GM12878 (cell line): ENCODE measurements at regions of chr2 and their contacts with region 1.

Region 1: GRCh38 chr2:111168528-111169239 is 48.0 kb downstream of the BCL2L11 start:
- DNase-seq: peak; percentile 68
- ATAC-seq: peak; percentile 95
- H3K4me3 ChIP-seq: no peak overlapping the region
- H3K27ac ChIP-seq: no peak overlapping the region
- H3K4me1 ChIP-seq: peaks cover 17% of the 10 kb centered on the region
- H3K27me3 ChIP-seq: peaks cover 0 to 3% of the 10 kb centered on the region in 2 experiments; a peak in 1 of 4 replicates
- CTCF ChIP-seq: no peak
- EP300 ChIP-seq: peak; percentile 77 to 80; a peak in 3 of 4 replicates
- POLR2A ChIP-seq: no peak
- RAD21 ChIP-seq: no peak

Region 2: DNA sequence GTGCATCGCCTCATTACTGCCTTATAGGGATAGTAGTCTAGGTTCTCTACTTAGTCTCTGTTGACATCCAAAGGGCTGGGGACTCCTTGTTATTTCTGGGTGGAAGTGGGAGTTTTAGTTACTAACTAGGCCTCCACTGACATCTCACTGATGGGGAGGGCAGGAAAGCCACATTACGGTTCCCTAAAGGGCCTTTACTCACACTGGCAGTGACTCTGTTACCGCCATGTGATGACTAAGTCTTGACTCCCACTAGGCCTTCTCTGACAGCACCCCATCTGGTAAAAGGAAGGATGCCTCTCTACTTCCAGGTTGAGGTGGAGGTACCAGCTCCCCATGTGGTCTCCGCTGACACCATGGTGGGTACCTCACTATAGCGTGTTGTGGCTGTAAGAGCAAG is 62.0 kb before region 1 on chr2:
- CTCF ChIA-PET with region 1: no interaction called
- POLR2A ChIA-PET with region 1: no interaction called
- RAD21 ChIA-PET with region 1: no interaction called
- SMC1A ChIA-PET with region 1: no interaction called
- in situ Hi-C with region 1: no loop called
- intact Hi-C with region 1: no loop called
- DNase-seq: no peak
- ATAC-seq: no peak
- H3K4me3 ChIP-seq: no peak overlapping the region
- H3K27ac ChIP-seq: no peak overlapping the region
- H3K4me1 ChIP-seq: no peaks in the 10 kb centered on the region
- H3K27me3 ChIP-seq: peaks cover 0 to 5% of the 10 kb centered on the region in 2 experiments; a peak in 3 of 4 replicates
- CTCF ChIP-seq: no peak
- EP300 ChIP-seq: no peak
- POLR2A ChIP-seq: no peak
- RAD21 ChIP-seq: no peak

Region 3: GRCh38 chr2:111120253-111121027 is 48.2 kb before region 1 on chr2 and contains the start of gene BCL2L11:
- CTCF ChIA-PET with region 1: interaction called, 5 read pairs
- POLR2A ChIA-PET with region 1: interaction called, 4 read pairs
- RAD21 ChIA-PET with region 1: interaction called, 26 read pairs
- SMC1A ChIA-PET with region 1: interaction called, 17 read pairs
- in situ Hi-C with region 1: no loop called
- intact Hi-C with region 1: no loop called
- DNase-seq: no peak
- ATAC-seq: peak; percentile 66
- H3K4me3 ChIP-seq: peak within 1 kb of the TSS; percentile 80
- H3K27ac ChIP-seq: no peak within 1 kb of the TSS
- H3K4me1 ChIP-seq: peaks cover 37% of the 10 kb centered on the region
- H3K27me3 ChIP-seq: peaks cover 7 to 29% of the 10 kb centered on the region in 2 experiments
- CTCF ChIP-seq: peak; percentile 11 to 31 (median 29); a peak in 1 of 6 replicates
- EP300 ChIP-seq: no peak
- POLR2A ChIP-seq: peak; percentile 88
- RAD21 ChIP-seq: no peak
- polyA plus RNA-seq, gene BCL2L11: 0.29 to 0.64 TPM

Region 4: DNA sequence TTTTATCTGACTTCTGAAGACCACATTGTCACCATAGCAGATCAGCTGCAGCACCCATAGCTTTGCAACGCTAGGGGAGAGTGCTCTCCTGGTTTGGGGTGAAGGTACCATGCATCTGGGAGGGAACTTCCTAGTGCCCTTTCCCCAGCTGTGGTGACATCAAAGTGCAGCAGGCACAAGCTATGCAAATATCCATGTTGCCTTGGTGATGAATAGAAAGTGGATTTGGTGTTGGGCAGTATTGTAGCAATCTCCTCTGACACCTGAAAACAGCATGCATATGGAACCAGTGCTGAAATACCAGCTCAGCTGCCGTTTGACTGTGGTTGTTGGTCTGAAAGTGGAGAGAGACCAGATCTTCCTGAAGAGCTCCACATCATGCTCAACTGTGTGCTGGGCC is 10.9 kb before region 1 on chr2:
- CTCF ChIA-PET with region 1: interaction called, 26 read pairs
- POLR2A ChIA-PET with region 1: interaction called, 21 read pairs
- RAD21 ChIA-PET with region 1: interaction called, 27 read pairs
- SMC1A ChIA-PET with region 1: interaction called, 44 read pairs
- in situ Hi-C with region 1: no loop called
- intact Hi-C with region 1: no loop called
- DNase-seq: peak; percentile 69
- ATAC-seq: peak; percentile 82
- H3K4me3 ChIP-seq: no peak overlapping the region
- H3K27ac ChIP-seq: no peak overlapping the region
- H3K4me1 ChIP-seq: peaks cover 19% of the 10 kb centered on the region
- H3K27me3 ChIP-seq: no peaks in the 10 kb centered on the region
- CTCF ChIP-seq: peak; percentile 19 to 27 (median 22); a peak in 3 of 6 replicates
- EP300 ChIP-seq: no peak
- POLR2A ChIP-seq: no peak
- RAD21 ChIP-seq: no peak

Region 5: GRCh38 chr2:111185638-111186022 is 16.9 kb after region 1 on chr2:
- CTCF ChIA-PET with region 1: interaction called, 6 read pairs
- POLR2A ChIA-PET with region 1: interaction called, 9 read pairs
- RAD21 ChIA-PET with region 1: interaction called, 13 read pairs
- SMC1A ChIA-PET with region 1: interaction called, 137 read pairs
- in situ Hi-C with region 1: no loop called
- intact Hi-C with region 1: no loop called
- DNase-seq: no peak
- ATAC-seq: peak; percentile 62
- H3K4me3 ChIP-seq: no peak overlapping the region
- H3K27ac ChIP-seq: no peak overlapping the region
- H3K4me1 ChIP-seq: no peaks in the 10 kb centered on the region
- H3K27me3 ChIP-seq: peaks cover 0 to 22% of the 10 kb centered on the region in 2 experiments; a peak in 2 of 4 replicates
- CTCF ChIP-seq: no peak
- EP300 ChIP-seq: no peak
- POLR2A ChIP-seq: no peak
- RAD21 ChIP-seq: no peak

Region 6: DNA sequence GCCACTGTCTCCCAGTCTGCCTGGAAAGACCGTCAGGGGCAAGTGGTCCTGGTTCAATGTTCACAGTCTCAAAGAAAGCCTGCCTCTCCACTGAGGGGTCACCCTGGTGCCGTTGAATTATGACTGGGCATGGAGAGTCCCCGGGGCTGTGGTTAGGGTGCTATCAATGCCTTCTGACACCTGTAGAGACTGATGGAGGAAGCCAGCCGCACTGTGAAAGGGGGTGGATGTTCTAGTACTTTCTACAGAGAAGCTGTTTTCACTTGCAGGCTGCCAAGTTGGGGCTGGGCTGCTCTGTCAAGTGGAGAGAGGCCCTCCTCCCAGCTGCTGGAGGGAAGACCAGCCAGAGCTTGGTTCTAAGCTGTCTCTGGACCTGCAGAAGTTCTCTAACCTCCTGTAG is 32.5 kb after region 1 on chr2:
- CTCF ChIA-PET with region 1: interaction called, 6 read pairs
- POLR2A ChIA-PET with region 1: interaction called, 6 read pairs
- RAD21 ChIA-PET with region 1: interaction called, 9 read pairs
- SMC1A ChIA-PET with region 1: interaction called, 137 read pairs
- in situ Hi-C with region 1: no loop called
- intact Hi-C with region 1: no loop called
- DNase-seq: peak; percentile 87
- ATAC-seq: peak; percentile 90
- H3K4me3 ChIP-seq: no peak overlapping the region
- H3K27ac ChIP-seq: peak overlapping the region; percentile 26; the same call in 1 of the 2 replicates
- H3K4me1 ChIP-seq: peaks cover 46% of the 10 kb centered on the region
- H3K27me3 ChIP-seq: no peaks in the 10 kb centered on the region
- CTCF ChIP-seq: no peak
- EP300 ChIP-seq: peak; percentile 84 to 90; a peak in 3 of 4 replicates
- POLR2A ChIP-seq: no peak
- RAD21 ChIP-seq: no peak

Region 7: DNA sequence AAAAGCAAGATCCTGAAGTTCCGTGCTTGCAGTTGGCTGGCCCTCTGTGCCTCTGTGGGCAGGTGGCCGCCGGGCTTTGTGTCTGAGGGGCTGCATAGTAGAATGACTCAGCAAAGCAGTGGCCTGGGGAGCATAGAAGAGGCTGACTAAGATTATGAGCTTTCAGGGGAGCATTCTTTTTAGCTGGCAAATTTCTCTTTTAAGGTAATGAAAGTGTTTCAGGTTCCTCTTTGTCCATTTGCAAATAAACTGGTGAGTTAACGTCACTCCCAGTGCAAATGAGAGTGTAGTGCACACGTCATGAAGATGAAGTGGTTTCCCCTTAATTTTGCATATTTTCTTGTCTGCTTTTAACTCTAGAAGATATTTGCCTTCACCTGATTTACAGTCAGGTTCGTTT is 50.6 kb after region 1 on chr2:
- CTCF ChIA-PET with region 1: interaction called, 9 read pairs
- POLR2A ChIA-PET with region 1: no interaction called
- RAD21 ChIA-PET with region 1: interaction called, 26 read pairs
- SMC1A ChIA-PET with region 1: interaction called, 21 read pairs
- in situ Hi-C with region 1: no loop called
- intact Hi-C with region 1: no loop called
- DNase-seq: peak; percentile 98
- ATAC-seq: peak; percentile 96
- H3K4me3 ChIP-seq: peak overlapping the region; percentile 15; the same call in 1 of the 2 replicates
- H3K27ac ChIP-seq: peak overlapping the region; percentile 74
- H3K4me1 ChIP-seq: peaks cover 17% of the 10 kb centered on the region
- H3K27me3 ChIP-seq: no peaks in the 10 kb centered on the region
- CTCF ChIP-seq: no peak
- EP300 ChIP-seq: peak; percentile 99 to 100
- POLR2A ChIP-seq: no peak
- RAD21 ChIP-seq: 0 out of 2 replicates have a peak, but pooled peaks have one; percentile 0

Region 8: GRCh38 chr2:111252436-111252835 is 83.8 kb after region 1 on chr2:
- CTCF ChIA-PET with region 1: no interaction called
- POLR2A ChIA-PET with region 1: no interaction called
- RAD21 ChIA-PET with region 1: no interaction called
- SMC1A ChIA-PET with region 1: no interaction called
- in situ Hi-C with region 1: no loop called
- intact Hi-C with region 1: no loop called
- DNase-seq: no peak
- ATAC-seq: no peak
- H3K4me3 ChIP-seq: no peak overlapping the region
- H3K27ac ChIP-seq: no peak overlapping the region
- H3K4me1 ChIP-seq: no peaks in the 10 kb centered on the region
- H3K27me3 ChIP-seq: no peaks in the 10 kb centered on the region
- CTCF ChIP-seq: no peak
- EP300 ChIP-seq: no peak
- POLR2A ChIP-seq: no peak
- RAD21 ChIP-seq: no peak